Breast epithelium (tissue), 4 donors: ENCODE measurements at regions of chr1 and their contacts with region 1.

Region 1: DNA sequence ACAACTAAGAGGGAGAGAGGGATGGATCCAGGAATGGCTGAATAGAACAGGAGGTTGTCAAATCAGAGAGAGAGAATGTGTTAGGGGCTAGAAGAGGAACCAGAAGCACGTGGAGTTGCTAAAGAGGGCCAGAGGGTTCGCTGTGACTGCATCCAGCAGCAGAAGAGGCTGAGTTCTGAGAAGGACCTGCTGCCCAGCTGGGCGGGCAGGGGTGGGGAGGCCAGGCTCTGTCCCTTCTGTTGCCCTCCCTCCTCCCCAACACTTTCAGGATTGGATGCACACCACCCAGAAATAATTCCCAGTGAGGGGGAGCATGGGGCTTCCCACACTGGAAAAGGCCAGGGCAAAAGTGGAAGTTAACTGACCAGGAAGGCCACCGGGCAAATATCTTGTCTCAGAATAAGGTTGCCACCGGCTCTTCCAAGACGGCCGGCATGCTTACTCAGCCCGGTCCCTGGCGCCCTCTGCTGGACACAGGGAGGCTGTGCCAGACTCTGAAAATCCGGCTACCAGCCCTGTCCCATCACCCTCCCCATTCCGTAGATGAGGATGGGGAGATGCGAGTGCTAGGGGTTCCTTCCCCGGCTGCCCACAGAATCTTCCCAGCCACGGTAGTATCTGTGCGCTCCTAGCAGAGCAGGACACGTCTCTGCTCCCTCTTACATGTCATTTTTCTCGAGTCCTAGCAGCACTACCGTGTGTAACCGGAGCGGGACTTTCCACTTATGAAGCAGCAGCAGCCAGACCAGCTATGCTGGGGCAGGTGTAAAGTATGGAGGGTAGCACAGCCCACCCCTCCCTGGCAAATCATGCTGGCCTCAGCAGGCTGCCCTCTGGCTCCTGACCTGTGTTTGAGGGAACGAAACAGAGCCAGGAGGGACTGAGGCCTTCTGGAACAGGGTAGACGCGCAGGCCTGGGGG is 46.8 kb upstream of the A3GALT2 start:
- DNase-seq: peak; percentile 82 to 91
- H3K4me3 ChIP-seq: no peak overlapping the region
- H3K27ac ChIP-seq: peak overlapping the region; percentile 89 to 94
- H3K4me1 ChIP-seq: peaks cover 20 to 46% of the 10 kb centered on the region in 2 donors
- H3K27me3 ChIP-seq: no peaks in the 10 kb centered on the region
- CTCF ChIP-seq: peak; percentile 94 to 97 (median 95)
- POLR2A ChIP-seq: no peak

Region 2: DNA sequence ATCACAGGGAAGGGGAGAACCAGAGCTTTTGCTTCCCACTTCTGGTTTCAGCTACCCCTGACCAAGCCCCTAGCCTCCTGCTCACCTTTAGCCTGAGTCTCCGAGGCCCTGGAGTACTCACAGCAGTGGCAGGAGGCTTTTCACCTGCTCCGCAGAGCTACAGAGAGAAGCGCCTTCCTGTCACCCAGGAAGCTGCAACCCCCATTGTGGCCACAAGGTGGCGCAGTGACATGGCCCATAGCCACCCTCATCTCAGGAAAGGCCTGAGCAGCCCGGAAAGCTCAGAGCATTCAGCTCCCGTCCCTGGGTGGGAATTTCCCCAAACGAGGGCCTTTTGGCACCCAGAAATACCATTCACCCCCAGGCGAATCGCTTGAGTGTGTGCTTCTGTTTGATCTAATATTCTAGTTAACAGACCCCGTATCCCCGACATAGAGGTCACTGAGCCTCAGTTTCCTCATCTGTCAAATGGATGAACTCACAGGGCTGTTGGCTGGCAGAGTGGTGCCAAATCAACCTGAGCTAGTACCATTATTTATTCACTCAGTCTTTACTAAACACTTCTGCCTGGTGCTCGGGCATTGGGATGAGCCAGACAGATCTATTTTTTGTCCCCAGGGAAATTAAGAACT is 72.2 kb before region 1 on chr1:
- intact Hi-C with region 1: loop called (anchors 5 kb)
- DNase-seq: peak; percentile 86 to 92
- H3K4me3 ChIP-seq: no peak overlapping the region
- H3K27ac ChIP-seq: peak overlapping the region; percentile 62 to 67
- H3K4me1 ChIP-seq: no peaks in the 10 kb centered on the region
- H3K27me3 ChIP-seq: no peaks in the 10 kb centered on the region
- CTCF ChIP-seq: peak; percentile 98 to 99 (median 98)
- POLR2A ChIP-seq: no peak

Region 3: DNA sequence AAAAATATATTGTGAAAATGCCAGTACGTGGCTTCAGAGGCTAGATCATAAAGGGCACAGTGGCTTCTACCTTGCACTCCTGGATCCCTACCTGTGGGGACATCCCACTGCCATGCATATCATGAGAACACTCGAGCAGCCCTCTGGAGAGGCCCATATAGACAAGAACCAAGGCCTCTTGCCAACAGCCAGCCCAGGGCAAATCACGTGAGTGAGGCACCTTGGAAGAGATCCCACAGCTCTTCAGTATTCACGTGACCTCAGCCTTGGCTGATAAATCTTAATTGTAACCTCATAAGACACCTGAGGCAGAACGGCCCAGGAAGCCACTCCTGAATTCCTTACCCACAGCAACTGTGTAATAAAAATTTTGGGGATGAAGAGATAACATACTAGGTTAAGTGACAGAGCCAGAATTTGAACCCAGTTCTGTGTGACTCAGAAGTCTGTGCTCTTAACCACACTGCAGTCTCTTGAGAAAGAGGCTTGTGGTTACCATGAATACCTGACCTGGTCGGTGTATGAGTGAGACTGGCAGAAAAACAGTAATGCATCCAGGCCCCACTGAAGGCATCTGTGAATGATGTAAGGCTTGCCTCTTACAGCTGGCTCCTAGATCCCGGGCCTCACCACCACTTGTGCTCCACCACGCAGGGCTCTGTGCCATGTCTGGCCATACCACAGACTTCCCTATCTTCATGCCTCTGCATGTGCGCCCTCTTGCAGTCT is 40.0 kb before region 1 on chr1:
- intact Hi-C with region 1: no loop called
- DNase-seq: peak in 1 of 2 donors; percentile 53
- H3K4me3 ChIP-seq: no peak overlapping the region
- H3K27ac ChIP-seq: peak overlapping the region; percentile 54 to 57
- H3K4me1 ChIP-seq: peaks cover 4 to 19% of the 10 kb centered on the region in 2 donors
- H3K27me3 ChIP-seq: no peaks in the 10 kb centered on the region
- CTCF ChIP-seq: no peak
- POLR2A ChIP-seq: no peak